ENCODE measurements at regions of chr12 and their contacts with region 1.

Region 1: GRCh38 chr12:3342056-3342455 is 148.9 kb upstream of the PRMT8 start:
- ATAC-seq: peak; percentile 96 to 100 (median 100)
- H3K4me3 ChIP-seq: no peak overlapping the region
- H3K27ac ChIP-seq: no peak overlapping the region
- H3K4me1 ChIP-seq: peaks cover 11 to 20% of the 10 kb centered on the region in 2 donors

Region 2: DNA sequence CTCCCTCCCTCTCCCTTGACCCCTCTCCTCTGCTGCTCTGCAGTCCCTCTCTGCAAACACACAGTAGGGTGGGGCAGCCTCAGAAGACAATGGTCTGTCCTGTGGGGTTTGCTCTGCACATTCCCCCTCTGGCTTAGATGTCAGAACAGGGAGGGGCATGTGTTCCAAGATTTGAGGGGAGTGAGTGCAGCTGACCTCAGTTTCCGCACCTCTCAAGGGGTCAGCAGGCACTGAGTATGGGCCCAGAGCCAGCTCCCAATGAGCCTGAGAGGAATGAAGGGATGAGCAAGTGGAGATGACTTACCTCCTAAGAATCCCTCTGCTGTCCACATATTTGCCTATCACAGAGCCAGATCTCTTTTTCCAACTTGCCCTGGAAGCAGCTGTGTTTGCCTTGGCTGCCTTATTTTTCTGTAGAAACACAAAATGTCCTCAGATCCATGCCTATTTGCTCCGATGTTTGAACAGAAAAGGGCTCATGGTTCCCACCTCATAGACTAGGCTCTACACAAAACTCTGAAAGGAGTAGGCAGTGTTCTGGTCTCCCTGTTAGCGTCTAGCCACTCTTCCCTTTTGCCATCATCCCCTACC is 299.5 kb after region 1 on chr12:
- in situ Hi-C with region 1: loop called in 1 of 9 experiments (anchors 25 kb)
- ATAC-seq: peak in 4 of 8 experiments; percentile 35 to 87 (median 68)
- H3K4me3 ChIP-seq: no peak overlapping the region
- H3K27ac ChIP-seq: no peak overlapping the region
- H3K4me1 ChIP-seq: peaks cover 10 to 15% of the 10 kb centered on the region in 2 donors

Region 3: GRCh38 chr12:3658327-3659163 is 316.5 kb after region 1 on chr12:
- in situ Hi-C with region 1: loop called in 1 of 9 experiments (anchors 25 kb)
- ATAC-seq: peak in 2 of 8 experiments; percentile 58 to 74
- H3K4me3 ChIP-seq: no peak overlapping the region
- H3K27ac ChIP-seq: no peak overlapping the region
- H3K4me1 ChIP-seq: peaks cover 63% of the 10 kb centered on the region in 2 donors

Region 4: GRCh38 chr12:3777206-3777809 is 435.3 kb after region 1 on chr12:
- in situ Hi-C with region 1: loop called in 2 of 9 experiments (anchors 25 kb)
- ATAC-seq: peak in 6 of 8 experiments; percentile 46 to 71 (median 61)
- H3K4me3 ChIP-seq: no peak overlapping the region
- H3K27ac ChIP-seq: no peak overlapping the region
- H3K4me1 ChIP-seq: no peaks in the 10 kb centered on the region

Measured in motor neuron (in vitro differentiated cells).